CD4-positive, alpha-beta memory T cell (primary cell): ENCODE measurements at regions of chr19 and their contacts with region 1.

Region 1: DNA sequence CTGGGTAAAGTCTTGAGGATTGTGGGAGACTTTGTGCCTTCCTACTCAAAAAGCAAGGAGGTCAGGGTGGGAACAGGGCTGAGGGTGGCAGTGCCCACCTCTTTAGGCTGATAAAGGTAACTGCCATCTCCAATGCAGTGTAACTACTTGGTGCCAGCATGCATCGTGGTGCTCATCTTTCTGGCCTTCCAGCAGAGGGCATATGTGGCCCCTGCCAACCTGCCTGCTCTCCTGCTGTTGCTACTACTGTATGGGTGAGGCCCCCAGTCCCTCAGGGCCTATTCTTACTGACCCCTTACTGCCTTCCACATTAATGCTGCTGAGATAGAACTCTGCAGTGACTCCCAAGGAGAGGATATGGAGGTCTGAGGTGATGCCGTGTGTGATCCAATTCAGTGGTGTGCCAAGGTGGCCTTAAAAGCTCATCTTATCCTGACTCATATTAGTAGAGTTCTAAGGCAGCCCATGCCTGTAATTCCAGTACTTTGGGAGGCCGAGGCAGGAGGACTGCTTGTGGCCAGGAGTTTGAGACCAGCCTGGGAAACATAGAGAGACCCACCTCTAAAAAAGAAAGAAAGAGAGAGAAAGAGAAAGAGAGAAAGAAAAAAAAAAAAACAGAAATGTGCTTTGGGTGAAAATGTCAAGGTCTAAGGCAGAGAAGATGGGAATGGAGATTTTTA is 9.7 kb upstream of the ARHGAP45 start:
- DNase-seq: peak in 4 of 5 donors; percentile 59 to 63 (median 62)
- H3K4me3 ChIP-seq: no peak overlapping the region
- H3K4me3 Mint-ChIP-seq: peak overlapping the region in 5 of 8 donors; percentile 25 to 74 (median 73)
- H3K27ac ChIP-seq: no peak overlapping the region
- H3K27ac Mint-ChIP-seq: peak overlapping the region; percentile 72 to 97 (median 91)
- H3K4me1 ChIP-seq: peaks cover 23% of the 10 kb centered on the region
- H3K4me1 Mint-ChIP-seq: peaks cover 16 to 31% (median 26%) of the 10 kb centered on the region in 4 donors
- H3K27me3 ChIP-seq: no peaks in the 10 kb centered on the region
- H3K27me3 Mint-ChIP-seq: no peaks in the 10 kb centered on the region

Region 2: DNA sequence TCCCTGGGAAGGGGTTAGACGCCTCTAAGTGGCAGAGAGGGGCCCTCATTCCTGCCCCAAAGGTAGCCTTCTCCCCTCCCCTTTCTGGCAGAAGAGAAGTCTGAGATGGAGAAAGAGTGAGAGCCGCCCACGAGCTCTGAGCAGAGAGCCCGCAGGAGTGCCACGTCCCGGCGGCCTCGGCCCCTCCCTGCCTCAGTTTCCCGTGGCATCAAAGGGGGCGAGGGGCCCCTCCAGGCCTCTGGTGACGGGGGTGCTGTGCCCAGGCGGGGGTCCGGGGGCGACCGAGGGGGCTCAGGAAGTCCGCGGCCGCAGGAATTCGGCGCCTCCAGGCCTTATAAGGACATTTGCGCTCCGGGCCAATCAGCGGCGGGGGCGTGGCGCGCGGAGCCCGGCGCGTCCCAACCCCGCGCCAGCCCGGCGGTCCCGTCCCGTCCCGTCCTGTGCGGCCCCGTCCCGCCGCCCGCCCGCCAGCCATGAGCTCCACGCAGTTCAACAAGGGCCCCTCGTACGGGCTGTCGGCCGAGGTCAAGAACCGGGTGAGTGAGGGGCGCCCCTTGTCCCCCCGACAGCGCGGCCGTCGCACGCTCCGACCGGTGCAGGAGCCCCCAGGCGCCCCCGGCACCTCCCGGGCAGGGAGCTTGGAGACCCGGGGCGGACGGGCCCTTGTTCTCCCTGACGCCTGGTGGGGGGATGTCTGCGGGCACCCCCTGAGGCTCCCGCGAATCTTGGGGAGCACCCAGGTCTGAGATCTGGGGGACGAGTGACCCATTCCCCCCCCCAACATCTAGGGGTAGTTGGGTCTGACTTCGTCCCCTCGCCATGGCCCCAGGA is 30.9 kb before region 1 on chr19 and contains the start of gene CNN2:
- CTCF ChIA-PET with region 1: interaction called, 3 read pairs
- POLR2A ChIA-PET with region 1: interaction called, 1,029 read pairs
- intact Hi-C with region 1: no loop called
- DNase-seq: peak in 4 of 5 donors; percentile 46 to 68 (median 60)
- H3K4me3 ChIP-seq: peak within 1 kb of the TSS; percentile 91 to 97
- H3K4me3 Mint-ChIP-seq: peak within 1 kb of the TSS; percentile 97 to 99 (median 98)
- H3K27ac ChIP-seq: peak within 1 kb of the TSS; percentile 83
- H3K27ac Mint-ChIP-seq: peak within 1 kb of the TSS; percentile 93 to 98 (median 95)
- H3K4me1 ChIP-seq: peaks cover 38% of the 10 kb centered on the region
- H3K4me1 Mint-ChIP-seq: peaks cover 11 to 38% (median 23%) of the 10 kb centered on the region in 4 donors
- H3K27me3 ChIP-seq: no peaks in the 10 kb centered on the region
- H3K27me3 Mint-ChIP-seq: peaks cover 0 to 2% of the 10 kb centered on the region in 2 donors
- total RNA-seq, gene CNN2: 263 to 266 TPM

Region 3: DNA sequence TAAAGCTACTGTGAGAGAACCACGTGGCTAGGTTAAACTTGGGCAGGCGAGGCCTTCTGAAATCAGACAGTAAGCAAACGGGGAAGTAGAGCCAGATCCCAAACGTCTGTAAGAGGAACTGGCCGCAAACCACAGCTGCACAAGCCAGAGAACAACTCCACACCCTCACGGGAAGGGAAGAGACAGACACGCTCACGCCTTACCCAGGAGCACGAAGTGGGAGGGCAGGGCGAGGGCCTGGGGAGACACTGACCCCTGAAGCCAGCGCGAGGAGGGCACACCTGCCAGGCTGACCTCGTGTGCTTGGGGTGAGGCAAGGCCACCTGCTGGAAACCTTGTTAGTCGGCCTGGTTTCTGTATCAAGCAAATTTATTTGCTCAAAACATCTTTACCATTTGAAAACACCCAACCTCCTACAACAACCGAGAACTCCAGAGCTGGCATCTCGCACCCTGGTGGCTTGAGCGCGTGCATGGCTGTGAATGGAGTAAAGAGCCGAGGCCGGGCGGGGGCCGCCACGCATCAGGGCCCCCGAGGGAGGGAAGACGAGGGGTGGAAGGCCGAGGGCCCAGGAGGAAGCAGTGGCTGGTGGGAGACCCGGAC is 30.6 kb after region 1 on chr19:
- CTCF ChIA-PET with region 1: interaction called, 23 read pairs
- POLR2A ChIA-PET with region 1: interaction called, 3,893 read pairs
- intact Hi-C with region 1: loop called (anchors 1 kb)
- DNase-seq: peak; percentile 59 to 78 (median 65)
- H3K4me3 ChIP-seq: no peak overlapping the region
- H3K4me3 Mint-ChIP-seq: peak overlapping the region in 5 of 8 donors; percentile 25 to 82 (median 69)
- H3K27ac ChIP-seq: peak overlapping the region; percentile 74
- H3K27ac Mint-ChIP-seq: peak overlapping the region; percentile 72 to 97 (median 93)
- H3K4me1 ChIP-seq: peaks cover 64% of the 10 kb centered on the region
- H3K4me1 Mint-ChIP-seq: peaks cover 14 to 67% (median 32%) of the 10 kb centered on the region in 4 donors
- H3K27me3 ChIP-seq: no peaks in the 10 kb centered on the region
- H3K27me3 Mint-ChIP-seq: no peaks in the 10 kb centered on the region

Region 4: DNA sequence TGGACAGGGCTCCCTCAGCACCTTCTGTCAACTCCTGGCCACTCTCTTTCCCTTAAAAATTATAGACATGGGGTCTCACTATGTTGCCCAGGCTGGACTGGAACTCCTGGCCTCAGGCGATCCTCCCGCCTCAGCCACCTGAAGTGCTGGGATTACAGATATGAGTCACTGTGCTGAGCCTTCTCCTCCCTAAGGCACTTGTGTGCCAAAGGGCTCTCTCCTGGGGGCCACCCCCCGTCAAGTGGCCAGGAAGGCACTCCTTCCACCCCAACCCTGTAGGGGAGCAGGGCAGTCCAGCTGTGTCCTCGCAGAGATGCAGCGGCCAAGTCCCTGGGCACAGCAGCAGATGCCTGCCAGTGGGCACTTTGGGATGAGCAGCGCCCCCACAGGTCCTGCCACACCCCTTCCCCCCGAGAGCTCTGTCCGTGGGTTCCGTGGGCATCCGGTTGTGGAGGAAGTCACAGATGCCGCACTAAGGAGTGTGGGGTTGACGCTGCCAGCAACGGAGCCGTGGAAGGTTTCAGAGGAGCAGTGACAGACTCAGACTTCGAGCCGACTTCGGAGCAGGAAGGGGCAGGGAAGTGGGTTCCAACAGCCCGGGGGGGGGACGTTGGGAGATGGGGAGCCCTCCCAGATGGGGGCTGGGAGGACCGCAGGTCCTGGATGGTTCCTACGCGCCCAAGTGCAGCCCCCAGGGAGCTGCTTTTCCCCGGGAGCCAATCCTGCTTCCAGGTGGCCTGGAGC is 551.2 kb after region 1 on chr19:
- CTCF ChIA-PET with region 1: no interaction called
- POLR2A ChIA-PET with region 1: no interaction called
- intact Hi-C with region 1: no loop called
- DNase-seq: peak; percentile 26 to 59 (median 38)
- H3K4me3 ChIP-seq: peak overlapping the region in 1 of 2 donors; percentile 63
- H3K4me3 Mint-ChIP-seq: peak overlapping the region; percentile 83 to 91 (median 86)
- H3K27ac ChIP-seq: peak overlapping the region; percentile 58
- H3K27ac Mint-ChIP-seq: peak overlapping the region; percentile 82 to 99 (median 92)
- H3K4me1 ChIP-seq: peaks cover 52% of the 10 kb centered on the region
- H3K4me1 Mint-ChIP-seq: peaks cover 18 to 70% (median 43%) of the 10 kb centered on the region in 4 donors
- H3K27me3 ChIP-seq: no peaks in the 10 kb centered on the region
- H3K27me3 Mint-ChIP-seq: no peaks in the 10 kb centered on the region

Region 5: GRCh38 chr19:2135474-2136402 is 1078.4 kb after region 1 on chr19:
- CTCF ChIA-PET with region 1: no interaction called
- POLR2A ChIA-PET with region 1: no interaction called
- intact Hi-C with region 1: no loop called
- DNase-seq: no peak
- H3K4me3 ChIP-seq: no peak overlapping the region
- H3K4me3 Mint-ChIP-seq: no peak overlapping the region
- H3K27ac ChIP-seq: no peak overlapping the region
- H3K27ac Mint-ChIP-seq: peak overlapping the region in 1 of 7 donors; percentile 8
- H3K4me1 ChIP-seq: no peaks in the 10 kb centered on the region
- H3K4me1 Mint-ChIP-seq: peaks cover 0 to 10% (median 5%) of the 10 kb centered on the region in 4 donors
- H3K27me3 ChIP-seq: no peaks in the 10 kb centered on the region
- H3K27me3 Mint-ChIP-seq: no peaks in the 10 kb centered on the region